MCF 10A (cell line): ENCODE measurements at regions of chr1 and their contacts with region 1.

Region 1: DNA sequence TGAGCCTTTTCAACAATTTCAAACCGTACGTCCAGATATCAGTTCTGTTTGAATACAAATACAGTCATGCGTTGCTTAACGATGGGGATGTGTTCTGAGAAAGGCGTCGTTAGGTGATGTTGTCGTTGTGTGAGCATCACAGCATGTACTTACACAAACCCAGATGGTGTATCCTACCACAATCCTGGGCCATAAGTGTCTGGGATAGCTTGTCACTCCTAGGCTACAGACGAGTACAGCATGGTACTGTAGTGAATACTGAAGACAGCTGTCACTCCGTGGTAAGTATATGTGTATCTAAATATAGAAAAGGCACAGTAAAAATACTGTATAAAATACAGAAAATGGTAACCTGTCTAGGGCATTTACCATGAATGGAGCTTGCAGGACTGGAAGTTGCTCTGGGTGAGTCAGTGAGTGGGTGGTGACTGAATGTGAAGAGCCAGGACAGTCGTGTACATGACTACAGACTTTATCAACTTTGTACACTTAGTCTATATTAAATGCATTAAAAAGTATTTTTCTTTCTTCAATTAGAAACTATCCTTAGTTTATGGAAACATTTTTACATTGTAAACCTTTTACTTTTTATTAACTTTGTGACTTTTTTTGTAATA is 10.5 kb upstream of the OR2W3 start:
- DNase-seq: peak; percentile 18
- H3K4me3 Mint-ChIP-seq: no peak overlapping the region
- H3K27ac Mint-ChIP-seq: no peak overlapping the region
- H3K4me1 Mint-ChIP-seq: no peaks in the 10 kb centered on the region
- H3K27me3 Mint-ChIP-seq: no peaks in the 10 kb centered on the region
- CTCF ChIP-seq: no peak

Region 2: GRCh38 chr1:247895976-247896375 is 11.1 kb after region 1 on chr1:
- CTCF ChIA-PET with region 1: interaction called, 3 read pairs
- POLR2A ChIA-PET with region 1: interaction called, 10 read pairs
- intact Hi-C with region 1: no loop called
- DNase-seq: no peak
- H3K4me3 Mint-ChIP-seq: no peak overlapping the region
- H3K27ac Mint-ChIP-seq: no peak overlapping the region
- H3K4me1 Mint-ChIP-seq: no peaks in the 10 kb centered on the region
- H3K27me3 Mint-ChIP-seq: no peaks in the 10 kb centered on the region
- CTCF ChIP-seq: no peak